Mammary epithelial cell (primary cell): ENCODE measurements at regions of chr15 and their contacts with region 1.

Region 1: GRCh38 chr15:53716909-53717876 is 42.3 kb downstream of the WDR72 start:
- DNase-seq: peak; percentile 2
- H3K4me3 ChIP-seq: no peak overlapping the region
- H3K27ac ChIP-seq: no peak overlapping the region
- H3K4me1 ChIP-seq: no peaks in the 10 kb centered on the region
- H3K27me3 ChIP-seq: no peaks in the 10 kb centered on the region
- CTCF ChIP-seq: peak; percentile 38 to 47

Region 2: DNA sequence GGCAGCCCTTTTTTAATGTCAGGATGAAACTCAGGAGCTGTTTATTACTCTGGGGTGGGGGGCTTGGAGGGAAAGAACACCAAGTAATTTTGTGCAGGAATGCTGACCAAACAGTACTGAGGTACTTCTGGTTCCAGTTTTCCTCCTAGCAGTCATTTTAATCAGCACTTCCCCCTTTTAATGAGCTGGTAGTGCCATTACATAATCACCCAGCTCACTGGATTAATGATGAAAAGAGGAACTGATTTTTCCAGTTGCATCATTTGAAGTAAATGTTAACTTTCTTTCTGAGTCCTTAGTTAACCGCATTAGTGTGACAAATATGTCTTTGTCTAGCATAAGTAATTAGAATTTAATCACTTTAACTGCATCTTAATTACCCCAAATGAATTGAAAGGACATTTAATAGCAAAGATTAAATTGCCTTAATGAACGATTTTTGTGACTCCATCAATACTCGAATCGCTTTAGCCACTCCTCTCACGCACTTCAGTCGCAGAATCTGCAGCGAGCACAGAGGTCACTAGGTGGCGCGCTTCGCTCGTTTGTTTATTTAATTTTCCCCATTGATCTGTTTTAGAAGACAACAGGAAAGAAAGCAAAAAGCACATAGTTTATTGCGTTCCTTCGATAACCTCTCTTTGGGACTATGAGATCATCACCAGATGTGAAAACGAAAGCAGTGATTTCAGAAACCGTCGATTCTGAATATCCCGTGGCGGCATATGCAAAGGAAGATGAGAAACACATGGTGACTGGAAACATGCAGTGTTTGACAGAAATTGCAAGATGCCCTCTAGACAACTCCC is 936.8 kb before region 1 on chr15:
- CTCF ChIA-PET with region 1: no interaction called
- dilution Hi-C with region 1: no loop called
- in situ Hi-C with region 1: loop called (anchors 25 kb)
- intact Hi-C with region 1: loop called (anchors 1 kb)
- DNase-seq: peak; percentile 41
- H3K4me3 ChIP-seq: no peak overlapping the region
- H3K27ac ChIP-seq: no peak overlapping the region
- H3K4me1 ChIP-seq: no peaks in the 10 kb centered on the region
- H3K27me3 ChIP-seq: peaks cover 34% of the 10 kb centered on the region
- CTCF ChIP-seq: peak; percentile 90 to 98

Region 3: GRCh38 chr15:53203454-53203853 is 513.7 kb before region 1 on chr15:
- CTCF ChIA-PET with region 1: no interaction called
- dilution Hi-C with region 1: no loop called
- in situ Hi-C with region 1: no loop called
- intact Hi-C with region 1: loop called (anchors 10 kb)
- DNase-seq: no peak
- H3K4me3 ChIP-seq: no peak overlapping the region
- H3K27ac ChIP-seq: no peak overlapping the region
- H3K4me1 ChIP-seq: no peaks in the 10 kb centered on the region
- H3K27me3 ChIP-seq: no peaks in the 10 kb centered on the region
- CTCF ChIP-seq: no peak

Region 4: DNA sequence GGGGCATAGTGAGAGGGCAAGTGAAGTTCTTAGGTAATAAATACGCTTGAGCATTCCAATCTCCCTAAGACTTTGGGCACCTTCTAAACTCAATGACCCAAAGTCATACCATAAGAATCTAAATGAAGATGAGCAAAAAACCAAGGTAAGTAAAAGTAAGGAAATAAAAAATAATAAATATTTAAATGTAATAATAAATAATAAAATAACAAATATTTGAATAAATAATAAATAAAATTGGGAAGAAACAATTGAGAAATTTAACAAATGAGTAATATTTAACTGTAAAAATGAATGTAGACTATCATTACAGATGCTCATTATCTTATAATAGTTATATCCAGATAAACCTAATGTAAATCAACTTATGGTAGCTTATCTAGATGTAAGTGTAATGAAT is 349.5 kb before region 1 on chr15:
- CTCF ChIA-PET with region 1: no interaction called
- dilution Hi-C with region 1: no loop called
- in situ Hi-C with region 1: no loop called
- intact Hi-C with region 1: no loop called
- DNase-seq: no peak
- H3K4me3 ChIP-seq: no peak overlapping the region
- H3K27ac ChIP-seq: no peak overlapping the region
- H3K4me1 ChIP-seq: no peaks in the 10 kb centered on the region
- H3K27me3 ChIP-seq: no peaks in the 10 kb centered on the region
- CTCF ChIP-seq: no peak

Region 5: DNA sequence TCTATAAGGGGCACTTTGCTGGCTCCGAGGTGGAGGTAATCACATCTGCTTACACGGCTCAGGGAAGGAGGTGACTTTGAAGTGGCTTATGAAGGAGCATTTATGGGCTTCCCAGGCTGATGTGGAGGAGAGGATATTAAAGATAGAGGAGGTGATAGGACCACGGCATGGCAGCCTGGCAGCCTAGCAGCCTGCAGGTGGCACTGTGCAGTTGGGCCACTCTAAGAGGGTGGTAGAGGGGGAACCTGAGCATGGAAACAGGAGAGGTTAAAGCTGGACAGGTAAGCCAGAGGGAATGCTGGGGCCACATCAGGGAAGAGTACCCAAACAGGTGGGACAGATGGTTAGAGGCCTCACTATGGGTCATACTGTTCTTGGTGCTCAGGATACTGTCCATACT is 332.8 kb before region 1 on chr15:
- CTCF ChIA-PET with region 1: no interaction called
- dilution Hi-C with region 1: no loop called
- in situ Hi-C with region 1: no loop called
- intact Hi-C with region 1: loop called (anchors 5 kb)
- DNase-seq: no peak
- H3K4me3 ChIP-seq: no peak overlapping the region
- H3K27ac ChIP-seq: no peak overlapping the region
- H3K4me1 ChIP-seq: no peaks in the 10 kb centered on the region
- H3K27me3 ChIP-seq: no peaks in the 10 kb centered on the region
- CTCF ChIP-seq: no peak

Region 6: DNA sequence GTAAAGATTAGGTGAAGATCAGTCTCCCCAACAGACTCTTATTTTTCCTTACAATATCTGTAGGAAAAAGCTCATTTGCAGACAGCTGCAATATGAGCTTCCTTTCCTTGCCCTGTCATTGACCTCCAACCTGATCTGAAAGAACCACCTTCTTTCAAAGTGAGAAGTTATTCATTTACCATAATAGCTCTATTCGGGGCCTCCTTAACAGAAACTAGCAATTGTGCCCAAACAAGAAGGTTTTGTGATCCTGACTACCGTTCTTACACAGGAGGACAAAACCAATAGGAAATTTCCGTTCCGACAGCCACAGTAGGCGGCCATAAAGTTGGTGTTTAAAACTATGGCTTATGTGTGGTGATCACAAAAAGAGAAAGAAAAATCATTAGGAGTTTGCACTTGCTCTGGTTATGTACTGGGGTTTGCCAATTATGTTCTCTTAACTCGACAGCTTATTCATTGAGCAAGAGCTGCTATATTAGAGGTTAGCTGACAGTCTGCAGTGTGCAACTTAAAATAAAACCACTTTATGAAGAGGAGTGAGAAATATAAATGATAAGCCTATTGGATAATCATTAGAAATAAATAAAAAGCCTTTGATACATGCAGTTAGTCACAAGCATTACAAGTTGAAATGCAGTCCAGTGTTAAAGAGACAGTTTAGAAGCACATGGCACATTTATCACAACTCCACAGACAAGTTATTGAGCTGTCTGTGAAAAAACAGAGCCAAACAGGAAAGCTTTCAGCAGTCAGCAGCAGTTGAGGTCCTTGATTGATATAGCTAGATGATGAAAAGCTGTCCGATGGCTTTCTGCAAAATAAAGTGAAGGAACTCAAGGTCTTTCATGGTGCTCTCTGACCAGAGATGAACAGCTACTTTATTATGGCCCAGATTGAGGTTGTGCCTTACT is 157.6 kb before region 1 on chr15:
- CTCF ChIA-PET with region 1: no interaction called
- dilution Hi-C with region 1: no loop called
- in situ Hi-C with region 1: no loop called
- intact Hi-C with region 1: no loop called
- DNase-seq: no peak
- H3K4me3 ChIP-seq: no peak overlapping the region
- H3K27ac ChIP-seq: no peak overlapping the region
- H3K4me1 ChIP-seq: no peaks in the 10 kb centered on the region
- H3K27me3 ChIP-seq: no peaks in the 10 kb centered on the region
- CTCF ChIP-seq: no peak